ENCODE measurements at regions of chr17 and their contacts with region 1.

Region 1: DNA sequence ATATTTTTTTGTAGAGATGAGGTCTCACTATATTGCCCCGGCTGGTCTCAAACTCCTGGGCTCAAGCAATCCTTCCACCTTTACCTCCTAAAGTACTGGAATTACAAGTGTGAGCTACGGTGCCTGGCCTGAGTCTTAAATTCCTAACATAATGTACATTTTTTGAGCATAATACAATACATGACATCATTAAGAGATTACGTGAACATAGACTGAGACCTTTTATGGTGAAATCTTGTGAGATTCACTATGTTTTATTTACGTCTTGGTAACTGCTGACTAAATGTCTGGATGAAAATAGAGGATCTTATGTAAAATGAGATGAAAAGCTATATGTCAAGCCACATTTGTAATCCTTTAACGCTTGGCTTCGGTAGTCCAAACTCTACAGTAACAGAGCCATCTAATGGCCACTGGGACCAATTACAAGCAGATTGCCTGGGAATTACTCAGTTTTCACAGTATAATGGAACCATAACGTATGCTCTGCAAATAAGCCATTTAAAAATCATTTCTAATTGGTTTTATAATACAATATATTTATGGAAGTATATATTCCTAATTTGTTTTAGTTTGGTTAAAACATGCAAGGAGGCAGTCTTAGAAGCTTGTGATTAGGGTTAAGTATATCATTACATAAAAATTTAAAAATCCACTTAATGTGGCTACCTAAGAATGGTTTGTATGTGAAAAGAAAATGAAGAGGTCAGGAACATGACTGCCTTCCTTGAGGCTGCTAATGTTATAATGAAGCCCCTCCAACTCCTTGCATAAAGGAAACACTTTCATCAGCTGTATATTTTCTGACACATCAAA is 8.1 kb upstream of the EFCAB13 start:
- DNase-seq: no peak
- ATAC-seq: peak; percentile 98
- H3K4me3 Mint-ChIP-seq: no peak overlapping the region
- H3K27ac Mint-ChIP-seq: no peak overlapping the region
- H3K4me1 Mint-ChIP-seq: peaks cover 2% of the 10 kb centered on the region
- H3K27me3 Mint-ChIP-seq: no peaks in the 10 kb centered on the region
- CTCF ChIP-seq: peak; percentile 28

Region 2: DNA sequence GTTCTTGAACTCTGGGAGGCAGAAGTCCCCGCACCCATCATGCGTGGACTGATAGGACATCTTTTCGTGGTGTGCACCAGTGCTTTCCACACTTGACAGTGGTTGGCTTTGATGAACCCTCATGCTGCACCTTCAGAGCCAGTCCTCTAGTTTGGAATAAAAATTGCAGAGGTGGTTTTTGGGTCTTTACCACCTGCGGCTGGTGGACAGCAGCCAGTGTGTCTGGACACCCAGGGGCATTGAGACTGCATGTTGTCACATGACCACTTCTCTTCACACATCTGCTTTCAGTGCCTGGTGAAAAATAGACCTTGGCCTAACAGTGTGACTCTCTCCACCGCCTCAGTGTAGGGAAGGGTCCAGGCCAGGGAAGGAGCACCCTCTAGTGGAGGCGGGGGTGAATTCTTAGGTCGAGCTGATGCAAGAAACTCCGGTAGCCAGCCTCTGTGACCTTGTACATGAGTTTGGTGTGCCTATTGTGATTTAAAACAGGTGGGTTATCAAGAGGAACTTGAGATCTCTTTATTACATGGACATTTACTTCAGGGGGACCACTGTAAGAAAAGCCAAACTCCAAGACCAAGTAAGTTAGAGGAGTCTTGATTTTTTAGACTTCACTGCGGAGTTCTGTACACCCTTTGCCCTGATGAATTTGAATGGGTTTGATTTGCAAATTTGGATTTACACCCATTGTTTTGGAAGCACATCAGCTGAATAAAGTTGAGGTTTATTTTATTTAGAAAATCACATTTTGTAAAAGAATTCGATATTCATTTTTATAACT is 374.8 kb before region 1 on chr17:
- CTCF ChIA-PET with region 1: interaction called, 4 read pairs
- POLR2A ChIA-PET with region 1: no interaction called
- intact Hi-C with region 1: loop called (anchors 5 kb)
- DNase-seq: peak; percentile 49
- ATAC-seq: peak; percentile 94
- H3K4me3 Mint-ChIP-seq: no peak overlapping the region
- H3K27ac Mint-ChIP-seq: peak overlapping the region; percentile 77
- H3K4me1 Mint-ChIP-seq: peaks cover 22% of the 10 kb centered on the region
- H3K27me3 Mint-ChIP-seq: no peaks in the 10 kb centered on the region
- CTCF ChIP-seq: no peak

Region 3: GRCh38 chr17:47205419-47205963 is 110.2 kb before region 1 on chr17:
- CTCF ChIA-PET with region 1: interaction called, 13 read pairs
- POLR2A ChIA-PET with region 1: no interaction called
- intact Hi-C with region 1: no loop called
- DNase-seq: peak; percentile 45
- ATAC-seq: peak; percentile 78
- H3K4me3 Mint-ChIP-seq: peak overlapping the region; percentile 80
- H3K27ac Mint-ChIP-seq: peak overlapping the region; percentile 98
- H3K4me1 Mint-ChIP-seq: peaks cover 74% of the 10 kb centered on the region
- H3K27me3 Mint-ChIP-seq: no peaks in the 10 kb centered on the region
- CTCF ChIP-seq: no peak

Region 4: GRCh38 chr17:47253541-47254402 is 61.9 kb before region 1 on chr17 and contains the start of gene ITGB3:
- CTCF ChIA-PET with region 1: interaction called, 10 read pairs
- POLR2A ChIA-PET with region 1: interaction called, 8 read pairs
- intact Hi-C with region 1: loop called (anchors 1 kb)
- DNase-seq: peak; percentile 78
- ATAC-seq: peak; percentile 97
- H3K4me3 Mint-ChIP-seq: peak within 1 kb of the TSS; percentile 91
- H3K27ac Mint-ChIP-seq: peak within 1 kb of the TSS; percentile 74
- H3K4me1 Mint-ChIP-seq: peaks cover 17% of the 10 kb centered on the region
- H3K27me3 Mint-ChIP-seq: no peaks in the 10 kb centered on the region
- CTCF ChIP-seq: no peak
- total RNA-seq, gene ITGB3: 4.1 and 4.7 TPM in 2 replicates

Region 5: DNA sequence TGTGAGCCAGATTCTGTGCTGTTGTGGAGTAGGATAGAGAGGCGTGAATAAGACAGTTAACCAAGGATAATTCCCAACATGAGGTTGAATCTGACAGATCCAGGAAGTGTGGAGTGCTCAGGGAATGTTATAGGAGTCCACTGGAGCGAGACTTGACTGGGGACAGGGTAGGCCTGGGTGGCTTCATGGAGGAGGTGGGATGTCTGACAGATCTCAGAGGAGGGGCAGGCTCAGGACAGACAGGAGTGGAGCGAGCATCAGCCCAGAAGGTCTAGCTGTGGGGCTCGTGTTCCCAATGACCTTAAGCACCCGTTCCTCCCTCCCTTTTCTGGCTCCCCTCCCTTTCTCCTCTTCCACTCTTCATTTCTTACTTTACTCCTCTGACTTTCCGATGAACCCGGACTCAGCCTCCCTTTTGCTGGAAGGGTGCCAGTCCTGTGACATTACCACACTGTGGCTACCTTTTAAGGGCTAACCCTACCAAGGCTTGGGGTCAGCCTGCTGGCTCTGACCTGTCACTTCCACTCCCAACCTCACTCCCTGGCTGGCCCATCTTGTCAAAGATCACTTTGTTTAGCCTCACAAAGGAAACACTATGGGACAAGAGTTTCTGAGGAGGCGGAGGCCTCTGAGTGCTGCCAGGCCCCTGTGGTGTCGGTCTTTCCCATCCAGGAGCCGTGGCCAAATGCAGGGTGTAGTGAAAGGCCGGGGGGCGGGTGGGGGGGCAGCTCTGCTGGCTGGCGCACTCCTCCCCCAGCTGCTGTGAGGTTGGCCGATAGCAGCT is 20.4 kb before region 1 on chr17:
- CTCF ChIA-PET with region 1: interaction called, 3 read pairs
- POLR2A ChIA-PET with region 1: interaction called, 4 read pairs
- intact Hi-C with region 1: loop called (anchors 1 kb)
- DNase-seq: no peak
- ATAC-seq: no peak
- H3K4me3 Mint-ChIP-seq: no peak overlapping the region
- H3K27ac Mint-ChIP-seq: peak overlapping the region; percentile 74
- H3K4me1 Mint-ChIP-seq: peaks cover 25% of the 10 kb centered on the region
- H3K27me3 Mint-ChIP-seq: no peaks in the 10 kb centered on the region
- CTCF ChIP-seq: no peak

Region 6: DNA sequence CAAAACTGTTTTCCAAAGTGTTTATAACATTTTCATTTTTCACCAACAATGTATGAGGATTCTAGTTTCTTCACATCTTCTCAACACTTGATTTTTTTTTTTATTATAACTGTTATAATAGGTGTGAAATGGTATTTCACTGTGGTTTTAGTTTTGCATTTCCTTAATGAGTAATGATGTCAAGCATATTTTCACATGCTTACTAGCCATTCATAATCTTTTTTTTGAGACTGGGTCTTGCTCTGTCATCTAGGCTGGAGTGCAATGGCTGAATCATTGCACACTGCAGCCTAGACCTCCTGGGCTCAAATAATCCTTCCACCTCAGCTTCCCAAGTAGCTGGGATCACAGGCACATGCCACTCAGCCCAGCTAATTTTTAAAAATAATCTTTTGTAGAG is 73.2 kb after region 1 on chr17:
- CTCF ChIA-PET with region 1: no interaction called
- POLR2A ChIA-PET with region 1: no interaction called
- intact Hi-C with region 1: no loop called
- DNase-seq: no peak
- ATAC-seq: no peak
- H3K4me3 Mint-ChIP-seq: no peak overlapping the region
- H3K27ac Mint-ChIP-seq: no peak overlapping the region
- H3K4me1 Mint-ChIP-seq: no peaks in the 10 kb centered on the region
- H3K27me3 Mint-ChIP-seq: no peaks in the 10 kb centered on the region
- CTCF ChIP-seq: no peak

Region 7: GRCh38 chr17:47404006-47404405 is 88.3 kb after region 1 on chr17:
- CTCF ChIA-PET with region 1: no interaction called
- POLR2A ChIA-PET with region 1: no interaction called
- intact Hi-C with region 1: no loop called
- DNase-seq: no peak
- ATAC-seq: no peak
- H3K4me3 Mint-ChIP-seq: no peak overlapping the region
- H3K27ac Mint-ChIP-seq: no peak overlapping the region
- H3K4me1 Mint-ChIP-seq: peaks cover 9% of the 10 kb centered on the region
- H3K27me3 Mint-ChIP-seq: no peaks in the 10 kb centered on the region
- CTCF ChIP-seq: no peak